OCI-LY7 (cell line): ENCODE measurements at regions of chr5 and their contacts with region 1.

Region 1: DNA sequence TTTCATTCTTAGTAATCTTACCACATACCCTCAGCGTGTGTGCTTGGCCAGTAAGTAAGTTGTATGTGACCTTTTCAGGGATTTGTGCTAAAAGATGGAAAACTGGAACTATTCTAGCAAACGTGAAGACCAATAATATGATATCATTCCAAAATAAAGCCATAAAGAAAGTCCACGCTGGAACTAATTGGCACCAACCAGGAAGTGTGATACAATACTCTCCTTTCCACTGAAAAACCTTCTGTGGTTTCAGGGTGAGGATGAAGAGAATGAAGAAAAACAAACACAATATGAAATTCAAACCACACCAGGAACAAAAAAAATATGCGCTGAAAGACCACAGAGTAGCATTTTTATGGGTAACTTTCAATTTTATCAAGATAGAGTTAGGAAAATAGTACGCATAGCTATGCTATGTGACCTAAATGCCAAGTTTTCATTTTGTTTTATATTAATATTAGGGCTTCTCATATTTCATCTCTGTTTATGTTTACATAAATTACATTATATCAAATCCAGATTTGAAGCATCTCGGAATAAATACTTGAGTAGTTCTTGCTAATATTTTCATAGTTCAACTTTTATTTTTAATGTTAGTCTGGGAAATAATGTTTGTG is 105.7 kb downstream of the EFNA5 start:
- DNase-seq: no peak
- H3K4me3 ChIP-seq: no peak overlapping the region
- H3K27ac ChIP-seq: no peak overlapping the region
- H3K4me1 ChIP-seq: peaks cover 39% of the 10 kb centered on the region
- CTCF ChIP-seq: no peak

Region 2: GRCh38 chr5:107157809-107158208 is 407.2 kb before region 1 on chr5:
- CTCF ChIA-PET with region 1: no interaction called
- POLR2A ChIA-PET with region 1: no interaction called
- intact Hi-C with region 1: no loop called
- DNase-seq: no peak
- H3K4me3 ChIP-seq: no peak overlapping the region
- H3K27ac ChIP-seq: no peak overlapping the region
- H3K4me1 ChIP-seq: no peaks in the 10 kb centered on the region
- CTCF ChIP-seq: no peak

Region 3: DNA sequence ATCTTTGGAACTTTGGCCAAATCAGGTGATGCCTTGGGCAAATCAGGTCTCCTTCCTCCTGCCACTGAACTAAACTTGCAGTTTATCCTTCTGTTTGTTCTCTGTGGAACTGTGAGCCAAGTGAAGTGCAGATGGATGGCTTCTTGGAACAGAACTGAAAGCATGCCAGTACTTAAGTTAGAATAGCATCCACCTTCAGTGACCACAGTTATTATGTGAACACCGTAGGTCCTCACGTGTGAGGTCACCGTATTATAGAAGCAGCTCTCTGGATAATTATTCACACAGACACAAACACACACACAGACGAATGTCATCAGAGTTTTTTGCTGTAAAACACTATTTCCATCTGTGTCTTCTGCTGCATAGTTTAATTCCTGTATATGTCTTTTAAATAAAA is 56.9 kb before region 1 on chr5:
- CTCF ChIA-PET with region 1: interaction called, 33 read pairs
- POLR2A ChIA-PET with region 1: interaction called, 154 read pairs
- intact Hi-C with region 1: no loop called
- DNase-seq: no peak
- H3K4me3 ChIP-seq: no peak overlapping the region
- H3K27ac ChIP-seq: no peak overlapping the region
- H3K4me1 ChIP-seq: peaks cover 64% of the 10 kb centered on the region
- CTCF ChIP-seq: no peak

Region 4: GRCh38 chr5:107538805-107539445 is 26.1 kb before region 1 on chr5:
- CTCF ChIA-PET with region 1: interaction called, 3 read pairs
- POLR2A ChIA-PET with region 1: interaction called, 13 read pairs
- intact Hi-C with region 1: no loop called
- DNase-seq: no peak
- H3K4me3 ChIP-seq: no peak overlapping the region
- H3K27ac ChIP-seq: no peak overlapping the region
- H3K4me1 ChIP-seq: peaks cover 20% of the 10 kb centered on the region
- CTCF ChIP-seq: no peak

Region 5: GRCh38 chr5:107705402-107706014 is 140.5 kb after region 1 on chr5:
- CTCF ChIA-PET with region 1: no interaction called
- POLR2A ChIA-PET with region 1: no interaction called
- intact Hi-C with region 1: no loop called
- DNase-seq: no peak
- H3K4me3 ChIP-seq: no peak overlapping the region
- H3K27ac ChIP-seq: no peak overlapping the region
- H3K4me1 ChIP-seq: no peaks in the 10 kb centered on the region
- CTCF ChIP-seq: no peak